Dorsolateral prefrontal cortex (tissue), 120 donors: ENCODE measurements at regions of chr17 and their contacts with region 1.

Region 1: DNA sequence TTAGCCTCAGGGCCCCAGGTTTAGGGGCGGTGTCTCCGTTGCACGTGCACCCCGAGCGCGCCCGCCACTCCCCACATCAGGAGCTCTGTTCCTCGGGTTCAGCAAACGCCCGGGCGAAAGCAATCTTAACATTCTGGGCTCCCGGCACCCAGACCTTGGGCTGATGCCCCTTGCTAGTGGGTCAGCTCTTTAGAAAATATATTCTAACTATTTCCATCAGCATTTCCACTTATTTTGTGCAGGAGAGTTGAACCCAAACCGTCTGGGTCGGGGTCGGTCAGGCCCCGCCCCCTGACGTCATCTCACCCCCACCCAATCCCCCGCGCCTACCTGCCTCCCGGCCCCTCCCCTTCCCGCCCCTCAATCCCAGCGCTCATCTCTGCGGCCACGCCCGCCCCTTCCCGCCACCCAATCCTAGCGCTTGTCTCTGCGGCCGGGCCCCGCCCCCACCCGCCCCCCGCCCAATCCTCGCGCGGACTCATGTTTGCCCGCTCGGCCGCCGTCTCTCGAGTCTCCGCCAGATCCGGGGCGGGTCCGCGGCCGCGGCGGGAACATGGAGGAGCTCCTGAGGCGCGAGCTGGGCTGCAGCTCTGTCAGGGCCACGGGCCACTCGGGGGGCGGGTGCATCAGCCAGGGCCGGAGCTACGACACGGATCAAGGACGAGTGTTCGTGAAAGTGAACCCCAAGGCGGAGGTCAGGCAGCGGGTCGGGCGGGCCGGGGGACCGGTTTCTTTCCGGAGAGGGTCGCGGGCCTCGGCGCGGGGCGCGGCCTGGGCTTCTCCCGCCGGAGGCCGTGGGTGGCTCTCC is at the start of gene FN3KRP:
- DNase-seq: peak; percentile 78 to 95 (median 91)
- H3K4me3 ChIP-seq: peak within 1 kb of the TSS; percentile 69 to 98 (median 92)
- H3K27ac ChIP-seq: peak within 1 kb of the TSS in 47 of 59 donors; percentile 17 to 89 (median 72)
- H3K27me3 ChIP-seq: no peaks in the 10 kb centered on the region
- CTCF ChIP-seq: peak in 6 of 56 donors; percentile 7 to 19 (median 14)
- total RNA-seq, gene FN3KRP: 32.3 to 70.7 (median 49.0) TPM

Region 2: DNA sequence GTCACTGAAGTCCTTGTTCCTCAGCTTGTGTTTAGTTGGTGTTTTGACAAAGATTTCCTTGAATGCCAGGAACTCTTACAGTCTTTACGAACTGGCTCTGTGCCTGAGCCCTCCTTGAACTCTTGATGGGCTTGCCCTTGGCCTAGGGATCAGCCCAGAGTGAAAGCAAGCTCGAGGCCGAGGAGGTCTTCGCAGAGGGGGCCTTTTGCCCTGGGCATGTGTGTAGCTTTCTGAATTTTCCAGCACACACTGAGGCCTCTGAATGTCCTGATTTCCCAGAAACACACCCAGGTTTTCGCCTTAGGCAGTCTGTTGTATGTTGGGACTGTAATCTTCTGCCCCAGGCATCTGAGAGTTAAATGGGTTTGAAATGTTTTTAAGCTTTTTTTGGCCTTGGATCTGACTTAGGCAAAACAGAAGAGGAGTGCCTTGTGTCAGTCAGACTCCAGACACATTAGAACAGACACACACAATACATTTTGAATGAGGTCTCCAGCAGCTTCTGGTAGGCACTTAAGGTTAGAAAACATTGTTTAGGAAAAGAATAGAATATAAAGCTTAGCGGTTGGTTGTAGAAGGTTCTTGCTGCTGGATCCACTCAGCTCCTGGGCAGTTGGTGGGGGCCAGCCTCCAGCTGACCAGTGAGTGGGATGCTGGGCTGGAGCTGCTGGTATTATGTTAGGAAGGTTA is 179.8 kb before region 1 on chr17:
- intact Hi-C with region 1: no loop called
- DNase-seq: no peak
- H3K4me3 ChIP-seq: peak overlapping the region in 22 of 59 donors; percentile 0 to 31 (median 14)
- H3K27ac ChIP-seq: peak overlapping the region; percentile 1 to 94 (median 77)
- H3K27me3 ChIP-seq: no peaks in the 10 kb centered on the region
- CTCF ChIP-seq: no peak

Region 3: GRCh38 chr17:82698065-82698973 is 18.1 kb before region 1 on chr17 and contains the start of gene RAB40B:
- intact Hi-C with region 1: loop called in 1 of 2 experiments (anchors 1 kb)
- DNase-seq: peak; percentile 99 to 100 (median 100)
- H3K4me3 ChIP-seq: peak within 1 kb of the TSS; percentile 60 to 96 (median 87)
- H3K27ac ChIP-seq: peak within 1 kb of the TSS in 58 of 59 donors; percentile 51 to 97 (median 86)
- H3K27me3 ChIP-seq: no peaks in the 10 kb centered on the region
- CTCF ChIP-seq: peak in 7 of 56 donors; percentile 1 to 22 (median 10)
- total RNA-seq, gene RAB40B: 61.9 to 320 (median 103) TPM